Esophagus squamous epithelium (tissue), 5 donors: ENCODE measurements at regions of chr5 and their contacts with region 1.

Region 1: GRCh38 chr5:176537608-176538504 is 654 bp upstream of the RNF44 start:
- DNase-seq: peak; percentile 98
- H3K4me3 ChIP-seq: peak overlapping the region; percentile 78 to 97 (median 84)
- H3K27ac ChIP-seq: peak overlapping the region; percentile 96 to 100 (median 99)
- H3K4me1 ChIP-seq: peaks cover 48 to 81% (median 63%) of the 10 kb centered on the region in 3 donors
- H3K27me3 ChIP-seq: no peaks in the 10 kb centered on the region
- CTCF ChIP-seq: no peak
- POLR2A ChIP-seq: peak in 2 of 4 donors; percentile 65 to 91

Region 2: DNA sequence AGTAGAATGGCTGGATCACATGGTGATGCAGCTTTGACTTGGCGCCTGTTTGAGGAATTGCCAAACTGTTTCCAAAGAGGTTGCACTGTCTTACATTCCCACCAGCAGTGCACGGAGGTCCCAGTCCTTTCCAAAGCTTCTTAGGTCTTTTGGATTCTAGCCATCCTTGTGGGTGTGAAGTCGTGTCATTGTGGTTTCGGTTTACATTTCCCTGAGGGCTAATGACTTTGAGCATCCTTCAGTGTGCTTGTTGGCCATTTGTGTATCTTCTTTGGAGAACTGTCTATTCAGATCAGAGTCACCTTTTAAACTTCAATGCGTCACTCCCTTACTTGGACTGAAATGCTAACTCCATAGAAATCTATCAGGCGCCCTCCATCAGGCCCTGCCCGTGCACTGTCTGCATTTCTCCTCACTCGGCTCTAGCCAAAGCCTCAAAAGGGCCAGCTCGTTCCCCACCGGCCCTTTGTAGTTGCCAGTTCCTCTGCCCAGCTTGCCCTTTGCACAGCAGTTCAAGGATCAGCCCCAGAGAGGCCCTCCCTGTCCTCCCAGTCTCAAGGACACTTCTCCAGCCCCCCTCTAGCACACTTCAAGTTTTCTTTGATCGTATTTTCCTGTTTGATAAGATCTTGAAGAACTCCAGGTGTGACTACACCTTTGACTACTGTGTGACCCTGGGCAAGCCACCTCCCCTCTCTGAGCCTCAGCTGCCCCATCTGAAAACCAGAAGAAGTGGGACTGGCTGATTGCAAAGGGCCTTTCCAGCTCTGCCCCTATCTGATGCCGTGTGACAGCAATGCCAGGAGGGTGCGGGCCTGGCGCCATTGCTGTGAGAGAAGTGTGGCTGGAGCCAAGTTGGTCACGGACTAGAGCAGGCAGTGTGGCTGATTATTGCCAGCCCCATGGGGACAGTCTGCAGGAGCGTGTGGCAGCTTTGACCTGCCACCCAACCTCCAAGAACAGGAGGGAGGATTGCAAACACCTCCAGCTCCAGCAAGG is 874.4 kb before region 1 on chr5:
- intact Hi-C with region 1: no loop called
- DNase-seq: no peak
- H3K4me3 ChIP-seq: no peak overlapping the region
- H3K27ac ChIP-seq: no peak overlapping the region
- H3K4me1 ChIP-seq: peaks cover 0 to 5% (median 2%) of the 10 kb centered on the region in 3 donors
- H3K27me3 ChIP-seq: peaks cover 0 to 66% (median under 1%) of the 10 kb centered on the region in 4 donors
- CTCF ChIP-seq: no peak
- POLR2A ChIP-seq: no peak

Region 3: GRCh38 chr5:176415952-176416924 is 121.6 kb before region 1 on chr5 and contains the start of gene CLTB:
- intact Hi-C with region 1: loop called (anchors 10 kb)
- DNase-seq: no peak
- H3K4me3 ChIP-seq: peak within 1 kb of the TSS; percentile 77 to 98 (median 90)
- H3K27ac ChIP-seq: peak within 1 kb of the TSS; percentile 92 to 99 (median 96)
- H3K4me1 ChIP-seq: peaks cover 37 to 63% (median 45%) of the 10 kb centered on the region in 3 donors
- H3K27me3 ChIP-seq: peaks cover 0 to 3% (median 0%) of the 10 kb centered on the region in 4 donors
- CTCF ChIP-seq: peak; percentile 50 to 97 (median 94)
- POLR2A ChIP-seq: peak in 3 of 4 donors; percentile 93 to 95 (median 94)
- total RNA-seq, gene CLTB: 347 to 732 (median 444) TPM